Activated CD4-positive, alpha-beta T cell treated with anti-CD3 and anti-CD28 coated beads for 36 hours (primary cell): ENCODE measurements at regions of chr2 and their contacts with region 1.

Region 1: DNA sequence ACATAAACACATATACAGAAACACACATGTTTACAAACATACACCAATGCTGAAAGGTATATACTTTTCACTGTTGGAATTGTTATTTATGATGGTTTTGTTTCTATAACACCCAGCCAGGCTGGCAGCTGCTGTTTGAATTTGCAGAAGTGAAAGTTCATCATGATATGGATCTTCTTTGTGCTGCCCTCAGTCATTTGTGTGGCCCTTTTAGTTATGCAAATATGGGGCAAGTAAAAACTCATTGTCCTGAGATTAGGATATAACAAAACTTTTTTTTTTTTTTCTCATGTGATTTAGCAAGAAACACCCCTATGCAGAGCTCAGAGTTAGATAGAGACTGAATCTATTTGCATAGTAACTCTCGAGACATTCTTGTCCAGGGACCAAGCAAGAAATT is 714.1 kb downstream of the KCNJ3 start:
- DNase-seq: no peak
- ATAC-seq: no peak
- H3K4me3 Mint-ChIP-seq: no peak overlapping the region
- H3K27ac Mint-ChIP-seq: no peak overlapping the region
- H3K4me1 Mint-ChIP-seq: no peaks in the 10 kb centered on the region
- H3K27me3 Mint-ChIP-seq: no peaks in the 10 kb centered on the region

Region 2: DNA sequence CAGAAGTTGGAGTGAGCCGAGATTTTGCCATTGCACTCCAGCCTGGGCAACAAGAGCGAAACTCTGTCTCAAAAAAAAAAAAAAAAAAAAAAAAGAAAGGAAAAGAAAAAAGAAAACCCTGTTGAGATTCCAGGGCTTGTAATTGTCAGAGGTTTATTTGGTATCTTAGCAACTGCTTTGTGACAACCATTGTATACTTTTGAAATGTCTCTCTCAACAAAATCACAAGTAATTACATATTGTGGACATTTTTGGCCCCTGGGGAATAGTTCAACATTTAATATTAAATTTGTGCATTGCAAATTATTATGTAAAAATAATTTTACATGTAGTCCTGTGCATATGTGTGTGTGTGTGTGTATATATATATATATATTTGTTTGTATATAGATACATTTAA is 1270.1 kb before region 1 on chr2:
- CTCF ChIA-PET with region 1: no interaction called
- POLR2A ChIA-PET with region 1: no interaction called
- intact Hi-C with region 1: loop called in 1 of 2 experiments (anchors 5 kb)
- DNase-seq: no peak
- ATAC-seq: no peak
- H3K4me3 Mint-ChIP-seq: no peak overlapping the region
- H3K27ac Mint-ChIP-seq: no peak overlapping the region
- H3K4me1 Mint-ChIP-seq: no peaks in the 10 kb centered on the region
- H3K27me3 Mint-ChIP-seq: no peaks in the 10 kb centered on the region

Region 3: DNA sequence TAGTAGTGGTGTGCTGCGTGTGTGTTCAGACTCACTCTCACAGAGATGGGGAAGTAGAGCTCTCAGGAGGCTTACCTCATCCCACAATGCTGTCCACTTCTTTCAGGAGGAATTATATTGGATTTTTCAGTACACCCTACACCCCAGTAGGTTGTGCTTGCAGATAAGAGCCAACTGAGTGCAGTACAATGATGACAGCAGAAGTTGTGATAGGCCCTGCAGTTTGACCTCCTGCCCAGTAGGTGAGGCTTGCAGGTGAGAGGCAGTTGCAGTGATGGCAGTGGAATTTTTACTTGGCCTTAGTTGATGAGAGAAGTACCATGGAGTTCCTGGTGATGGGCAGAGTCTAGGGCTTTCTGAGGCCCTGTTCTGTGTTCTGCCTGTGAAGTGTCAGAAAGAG is 56.3 kb before region 1 on chr2:
- CTCF ChIA-PET with region 1: no interaction called
- POLR2A ChIA-PET with region 1: no interaction called
- intact Hi-C with region 1: no loop called
- DNase-seq: no peak
- ATAC-seq: no peak
- H3K4me3 Mint-ChIP-seq: no peak overlapping the region
- H3K27ac Mint-ChIP-seq: no peak overlapping the region
- H3K4me1 Mint-ChIP-seq: no peaks in the 10 kb centered on the region
- H3K27me3 Mint-ChIP-seq: no peaks in the 10 kb centered on the region